Activated B cell treated with CpG ODN at 0.5 μM for 24 hours (primary cell): ENCODE measurements at regions of chrX and their contacts with region 1.

Region 1: GRCh38 chrX:74343343-74344279 is 39.6 kb downstream of the ZCCHC13 start:
- DNase-seq: no peak
- ATAC-seq: peak; percentile 70
- H3K4me3 Mint-ChIP-seq: no peak overlapping the region
- H3K27ac Mint-ChIP-seq: no peak overlapping the region
- H3K4me1 Mint-ChIP-seq: peaks cover 12% of the 10 kb centered on the region
- H3K27me3 Mint-ChIP-seq: peaks cover 3% of the 10 kb centered on the region
- CTCF ChIP-seq: no peak

Region 2: DNA sequence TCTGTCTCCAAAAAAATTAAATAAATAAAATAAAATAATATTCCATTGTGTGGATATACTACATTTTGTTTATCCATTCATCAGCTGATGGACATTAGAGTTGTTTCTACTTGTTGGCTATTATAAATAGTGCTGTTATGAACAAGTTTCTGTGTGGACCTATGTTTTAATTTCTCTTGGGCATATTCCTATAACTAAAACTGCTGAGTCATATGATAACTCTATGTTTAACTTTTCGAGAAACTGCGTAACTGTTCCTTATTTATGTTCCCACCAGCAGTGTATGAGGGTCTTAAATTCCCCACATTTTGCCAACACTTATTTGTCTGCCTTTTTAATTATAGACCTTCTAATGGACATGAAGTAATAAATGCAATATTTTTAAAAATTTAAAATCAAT is 411.1 kb before region 1 on chrX:
- CTCF ChIA-PET with region 1: no interaction called
- POLR2A ChIA-PET with region 1: no interaction called
- intact Hi-C with region 1: no loop called
- DNase-seq: no peak
- ATAC-seq: no peak
- H3K4me3 Mint-ChIP-seq: no peak overlapping the region
- H3K27ac Mint-ChIP-seq: no peak overlapping the region
- H3K4me1 Mint-ChIP-seq: no peaks in the 10 kb centered on the region
- H3K27me3 Mint-ChIP-seq: no peaks in the 10 kb centered on the region
- CTCF ChIP-seq: no peak

Region 3: GRCh38 chrX:74015379-74016019 is 328.1 kb before region 1 on chrX:
- CTCF ChIA-PET with region 1: interaction called, 3 read pairs
- POLR2A ChIA-PET with region 1: no interaction called
- intact Hi-C with region 1: loop called (anchors 1 kb)
- DNase-seq: no peak
- ATAC-seq: peak; percentile 64
- H3K4me3 Mint-ChIP-seq: no peak overlapping the region
- H3K27ac Mint-ChIP-seq: no peak overlapping the region
- H3K4me1 Mint-ChIP-seq: no peaks in the 10 kb centered on the region
- H3K27me3 Mint-ChIP-seq: no peaks in the 10 kb centered on the region
- CTCF ChIP-seq: no peak

Region 4: DNA sequence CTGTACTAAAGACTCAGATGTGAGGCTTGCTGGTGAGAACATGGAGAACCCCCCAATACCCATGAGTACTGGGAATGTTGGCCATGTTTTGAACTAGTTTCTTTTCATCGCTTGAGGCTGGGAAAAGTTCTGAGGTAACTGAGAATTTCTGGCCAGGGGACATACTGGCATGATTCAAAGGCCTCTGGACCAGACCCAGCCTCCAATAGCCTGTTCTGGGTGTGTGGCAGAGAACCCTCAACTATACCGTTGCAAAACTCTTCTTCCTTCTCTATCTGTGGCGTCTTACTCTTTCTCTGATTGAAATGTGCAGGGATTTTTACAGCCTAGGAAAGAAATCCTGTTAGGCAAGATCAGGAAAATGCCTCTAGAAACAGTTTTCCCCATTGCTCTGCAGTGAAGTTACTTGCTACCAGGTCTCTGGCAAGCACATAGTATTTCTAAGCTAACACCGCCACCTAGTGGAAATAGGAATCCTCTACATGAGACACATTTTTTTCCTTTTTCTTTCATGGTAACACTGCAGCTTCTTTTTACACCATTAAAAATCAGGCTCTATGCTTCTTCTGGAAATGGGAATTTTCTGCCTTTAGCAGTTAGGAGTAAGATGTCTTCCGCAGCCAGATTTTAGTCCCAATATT is 210.3 kb before region 1 on chrX:
- CTCF ChIA-PET with region 1: interaction called, 8 read pairs
- POLR2A ChIA-PET with region 1: no interaction called
- intact Hi-C with region 1: loop called (anchors 5 kb)
- DNase-seq: no peak
- ATAC-seq: no peak
- H3K4me3 Mint-ChIP-seq: no peak overlapping the region
- H3K27ac Mint-ChIP-seq: no peak overlapping the region
- H3K4me1 Mint-ChIP-seq: no peaks in the 10 kb centered on the region
- H3K27me3 Mint-ChIP-seq: no peaks in the 10 kb centered on the region
- CTCF ChIP-seq: no peak

Region 5: GRCh38 chrX:74371425-74372222 is 28.0 kb after region 1 on chrX:
- CTCF ChIA-PET with region 1: no interaction called
- POLR2A ChIA-PET with region 1: no interaction called
- intact Hi-C with region 1: no loop called
- DNase-seq: no peak
- ATAC-seq: no peak
- H3K4me3 Mint-ChIP-seq: no peak overlapping the region
- H3K27ac Mint-ChIP-seq: no peak overlapping the region
- H3K4me1 Mint-ChIP-seq: no peaks in the 10 kb centered on the region
- H3K27me3 Mint-ChIP-seq: no peaks in the 10 kb centered on the region
- CTCF ChIP-seq: no peak